Left ventricle myocardium inferior (tissue), 1 donor: ENCODE measurements at regions of chr1 and their contacts with region 1.

Region 1: GRCh38 chr1:200669314-200670241 is at the start of gene DDX59:
- DNase-seq: peak; percentile 97
- H3K4me3 ChIP-seq: peak within 1 kb of the TSS; percentile 93
- H3K27ac ChIP-seq: peak within 1 kb of the TSS; percentile 100
- H3K4me1 ChIP-seq: peaks cover 37% of the 10 kb centered on the region
- H3K27me3 ChIP-seq: no peaks in the 10 kb centered on the region
- CTCF ChIP-seq: no peak
- total RNA-seq, gene DDX59: 11.9 TPM

Region 2: GRCh38 chr1:200454425-200454824 is 215.2 kb before region 1 on chr1:
- intact Hi-C with region 1: no loop called
- DNase-seq: no peak
- H3K4me3 ChIP-seq: no peak overlapping the region
- H3K27ac ChIP-seq: no peak overlapping the region
- H3K4me1 ChIP-seq: no peaks in the 10 kb centered on the region
- H3K27me3 ChIP-seq: no peaks in the 10 kb centered on the region
- CTCF ChIP-seq: no peak

Region 3: GRCh38 chr1:200550367-200550766 is 119.2 kb before region 1 on chr1:
- intact Hi-C with region 1: no loop called
- DNase-seq: no peak
- H3K4me3 ChIP-seq: no peak overlapping the region
- H3K27ac ChIP-seq: no peak overlapping the region
- H3K4me1 ChIP-seq: no peaks in the 10 kb centered on the region
- H3K27me3 ChIP-seq: no peaks in the 10 kb centered on the region
- CTCF ChIP-seq: no peak

Region 4: GRCh38 chr1:200739499-200740290 is 70.1 kb after region 1 on chr1:
- intact Hi-C with region 1: loop called (anchors 10 kb)
- DNase-seq: no peak
- H3K4me3 ChIP-seq: peak overlapping the region; percentile 92
- H3K27ac ChIP-seq: peak overlapping the region; percentile 100
- H3K4me1 ChIP-seq: peaks cover 58% of the 10 kb centered on the region
- H3K27me3 ChIP-seq: no peaks in the 10 kb centered on the region
- CTCF ChIP-seq: no peak

Region 5: GRCh38 chr1:200802865-200803512 is 133.4 kb after region 1 on chr1:
- intact Hi-C with region 1: loop called (anchors 10 kb)
- DNase-seq: peak; percentile 62
- H3K4me3 ChIP-seq: no peak overlapping the region
- H3K27ac ChIP-seq: no peak overlapping the region
- H3K4me1 ChIP-seq: peaks cover 4% of the 10 kb centered on the region
- H3K27me3 ChIP-seq: no peaks in the 10 kb centered on the region
- CTCF ChIP-seq: peak; percentile 95